Activated CD4-positive, alpha-beta memory T cell treated with anti-CD3 and anti-CD28 coated beads for 36 hours (primary cell): ENCODE measurements at regions of chr1 and their contacts with region 1.

Region 1: DNA sequence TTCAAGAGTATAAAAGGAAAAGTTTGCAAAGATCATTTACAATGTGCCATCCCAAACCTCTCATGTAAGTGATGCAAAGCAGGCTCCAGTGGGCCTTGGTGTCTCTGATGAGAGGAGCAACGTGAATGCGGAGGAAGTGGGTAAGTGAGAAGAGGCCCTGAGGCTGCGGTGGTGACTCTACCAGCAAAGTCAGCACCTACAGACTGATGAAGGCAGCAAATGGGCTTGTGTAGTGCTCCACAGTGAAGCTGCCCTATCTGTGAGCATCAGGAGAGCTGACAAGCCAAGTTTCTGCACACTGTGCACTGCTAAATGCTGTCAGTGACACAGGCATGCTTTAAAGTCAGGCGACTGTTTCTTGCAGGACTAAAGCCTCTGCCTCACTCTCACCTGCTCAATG is 15.6 kb upstream of the RAP1A start:
- DNase-seq: peak; percentile 92
- H3K4me3 Mint-ChIP-seq: peak overlapping the region; percentile 70
- H3K27ac Mint-ChIP-seq: peak overlapping the region; percentile 96
- H3K4me1 Mint-ChIP-seq: peaks cover 72% of the 10 kb centered on the region
- H3K27me3 Mint-ChIP-seq: no peaks in the 10 kb centered on the region

Region 2: DNA sequence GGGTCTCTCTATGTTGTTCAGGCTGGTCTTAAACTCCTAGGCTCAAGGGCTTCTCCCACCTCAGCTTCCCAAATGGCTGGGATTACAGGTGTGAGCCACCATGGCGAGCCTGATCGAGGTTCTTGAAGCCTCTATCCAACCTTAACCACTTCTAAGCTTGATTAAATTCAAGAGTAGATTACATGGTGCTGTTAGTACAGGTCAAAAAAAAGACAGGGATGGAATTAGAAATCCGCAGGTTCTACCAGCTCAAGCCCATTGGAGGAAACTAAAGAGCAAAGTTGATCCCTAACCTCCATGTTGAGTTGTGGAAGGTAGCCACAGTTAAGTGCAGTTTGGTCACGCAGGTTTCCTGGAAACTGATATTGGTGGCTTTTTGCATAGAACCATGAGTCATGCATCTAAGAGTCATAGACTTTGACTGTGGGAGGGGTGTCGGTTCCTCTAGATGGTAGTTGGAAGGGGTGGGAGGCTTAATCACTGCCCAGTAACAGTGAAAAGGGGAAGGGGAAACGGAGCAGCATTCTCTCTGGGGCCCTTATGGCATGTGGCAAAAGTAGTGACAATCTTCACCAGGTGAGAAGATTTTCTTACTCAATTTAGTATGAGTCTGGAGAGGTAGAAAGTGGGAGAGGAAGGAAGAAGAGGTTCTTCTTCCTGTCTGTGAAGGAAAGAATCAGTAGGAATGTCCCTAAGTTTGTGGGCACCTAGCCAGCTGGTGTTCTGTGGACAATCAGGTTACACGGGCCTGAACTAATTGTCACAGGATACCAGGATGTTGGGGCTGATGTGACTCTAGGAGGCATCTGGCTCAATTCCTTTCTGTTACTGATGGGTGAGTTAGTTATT is 724.0 kb before region 1 on chr1:
- CTCF ChIA-PET with region 1: no interaction called
- POLR2A ChIA-PET with region 1: no interaction called
- intact Hi-C with region 1: loop called (anchors 5 kb)
- DNase-seq: peak; percentile 80
- H3K4me3 Mint-ChIP-seq: peak overlapping the region; percentile 69
- H3K27ac Mint-ChIP-seq: peak overlapping the region; percentile 99
- H3K4me1 Mint-ChIP-seq: peaks cover 62% of the 10 kb centered on the region
- H3K27me3 Mint-ChIP-seq: no peaks in the 10 kb centered on the region

Region 3: GRCh38 chr1:111222308-111223125 is 381.5 kb before region 1 on chr1:
- CTCF ChIA-PET with region 1: interaction called, 4 read pairs
- POLR2A ChIA-PET with region 1: no interaction called
- intact Hi-C with region 1: loop called (anchors 5 kb)
- DNase-seq: peak; percentile 89
- H3K4me3 Mint-ChIP-seq: peak overlapping the region; percentile 61
- H3K27ac Mint-ChIP-seq: peak overlapping the region; percentile 95
- H3K4me1 Mint-ChIP-seq: peaks cover 91% of the 10 kb centered on the region
- H3K27me3 Mint-ChIP-seq: no peaks in the 10 kb centered on the region

Region 4: GRCh38 chr1:111587509-111588174 is 16.3 kb before region 1 on chr1:
- CTCF ChIA-PET with region 1: interaction called, 57 read pairs
- POLR2A ChIA-PET with region 1: interaction called, 70 read pairs
- intact Hi-C with region 1: loop called (anchors 2 kb)
- DNase-seq: no peak
- H3K4me3 Mint-ChIP-seq: no peak overlapping the region
- H3K27ac Mint-ChIP-seq: no peak overlapping the region
- H3K4me1 Mint-ChIP-seq: peaks cover 28% of the 10 kb centered on the region
- H3K27me3 Mint-ChIP-seq: no peaks in the 10 kb centered on the region

Region 5: GRCh38 chr1:111619635-111620440 is 15.9 kb after region 1 on chr1 and contains the start of gene RAP1A:
- CTCF ChIA-PET with region 1: interaction called, 22 read pairs
- POLR2A ChIA-PET with region 1: interaction called, 151 read pairs
- intact Hi-C with region 1: loop called (anchors 1 kb)
- DNase-seq: peak; percentile 97
- H3K4me3 Mint-ChIP-seq: peak within 1 kb of the TSS; percentile 95
- H3K27ac Mint-ChIP-seq: peak within 1 kb of the TSS; percentile 97
- H3K4me1 Mint-ChIP-seq: peaks cover 65% of the 10 kb centered on the region
- H3K27me3 Mint-ChIP-seq: no peaks in the 10 kb centered on the region
- total RNA-seq, gene RAP1A: 292 to 294 TPM

Region 6: GRCh38 chr1:111648806-111649205 is 44.8 kb after region 1 on chr1:
- CTCF ChIA-PET with region 1: no interaction called
- POLR2A ChIA-PET with region 1: no interaction called
- intact Hi-C with region 1: loop called (anchors 2 kb)
- DNase-seq: no peak
- H3K4me3 Mint-ChIP-seq: no peak overlapping the region
- H3K27ac Mint-ChIP-seq: peak overlapping the region; percentile 64
- H3K4me1 Mint-ChIP-seq: peaks cover 74% of the 10 kb centered on the region
- H3K27me3 Mint-ChIP-seq: no peaks in the 10 kb centered on the region